ENCODE measurements at regions of chr2 and their contacts with region 1.

Region 1: GRCh38 chr2:177169810-177170514 is 42.6 kb upstream of the HNRNPA3 start:
- DNase-seq: no peak
- ATAC-seq: no peak
- H3K4me3 ChIP-seq: no peak overlapping the region
- H3K27ac ChIP-seq: peak overlapping the region in 2 of 12 donors; percentile 2 to 55
- H3K4me1 ChIP-seq: peaks cover 5 to 50% (median 21%) of the 10 kb centered on the region in 12 donors
- H3K27me3 ChIP-seq: no peaks in the 10 kb centered on the region
- CTCF ChIP-seq: no peak
- POLR2A ChIP-seq: no peak

Region 2: GRCh38 chr2:177147093-177147694 is 22.8 kb before region 1 on chr2:
- intact Hi-C with region 1: no loop called
- DNase-seq: no peak
- ATAC-seq: peak in 1 of 4 donors; percentile 58
- H3K4me3 ChIP-seq: no peak overlapping the region
- H3K27ac ChIP-seq: no peak overlapping the region
- H3K4me1 ChIP-seq: peaks cover 0 to 14% (median 4%) of the 10 kb centered on the region in 12 donors
- H3K27me3 ChIP-seq: peaks cover 10 to 84% (median 50%) of the 10 kb centered on the region in 9 donors
- CTCF ChIP-seq: peak; percentile 27 to 68 (median 53)
- POLR2A ChIP-seq: no peak

Region 3: GRCh38 chr2:177207101-177207500 is 37.1 kb after region 1 on chr2:
- intact Hi-C with region 1: loop called in 7 of 10 experiments (anchors 2 to 5 kb)
- DNase-seq: no peak
- ATAC-seq: peak in 1 of 4 donors; percentile 53
- H3K4me3 ChIP-seq: no peak overlapping the region
- H3K27ac ChIP-seq: no peak overlapping the region
- H3K4me1 ChIP-seq: peaks cover 0 to 19% (median 13%) of the 10 kb centered on the region in 12 donors
- H3K27me3 ChIP-seq: no peaks in the 10 kb centered on the region
- CTCF ChIP-seq: no peak
- POLR2A ChIP-seq: no peak